ENCODE measurements at regions of chr5 and their contacts with region 1.

Region 1: GRCh38 chr5:79020861-79021561 is 35.9 kb upstream of the ARSB start:
- DNase-seq: peak; percentile 43
- H3K4me3 ChIP-seq: peak overlapping the region; percentile 15; the same call in 1 of the 2 replicates
- H3K27ac ChIP-seq: no peak overlapping the region
- H3K27me3 ChIP-seq: no peaks in the 10 kb centered on the region
- CTCF ChIP-seq: peak; percentile 90

Region 2: DNA sequence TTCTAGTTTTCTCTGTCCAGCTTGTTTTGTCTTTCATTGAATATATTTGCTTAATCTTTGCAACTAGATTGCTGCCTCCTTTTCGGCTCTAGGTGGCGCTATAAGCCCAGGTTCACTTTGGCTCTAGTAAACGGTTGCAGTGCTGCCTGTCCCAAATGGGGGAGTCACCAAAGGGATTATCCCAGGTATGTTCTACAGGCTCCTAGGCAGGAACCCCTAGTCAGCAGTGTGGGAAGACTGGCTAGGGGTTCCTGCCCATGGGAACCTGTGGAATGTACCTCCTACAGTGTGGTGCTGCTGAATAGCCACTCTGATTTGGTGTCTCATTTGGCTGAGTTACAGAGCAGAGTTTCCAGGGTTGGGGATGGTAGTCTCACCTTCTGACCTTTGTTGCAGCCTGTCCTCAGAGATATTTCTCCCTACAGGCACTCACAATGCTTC is 121.1 kb before region 1 on chr5:
- CTCF ChIA-PET with region 1: interaction called, 17 read pairs
- POLR2A ChIA-PET with region 1: no interaction called
- DNase-seq: no peak
- H3K4me3 ChIP-seq: no peak overlapping the region
- H3K27ac ChIP-seq: no peak overlapping the region
- H3K27me3 ChIP-seq: no peaks in the 10 kb centered on the region
- CTCF ChIP-seq: peak; percentile 77

Region 3: DNA sequence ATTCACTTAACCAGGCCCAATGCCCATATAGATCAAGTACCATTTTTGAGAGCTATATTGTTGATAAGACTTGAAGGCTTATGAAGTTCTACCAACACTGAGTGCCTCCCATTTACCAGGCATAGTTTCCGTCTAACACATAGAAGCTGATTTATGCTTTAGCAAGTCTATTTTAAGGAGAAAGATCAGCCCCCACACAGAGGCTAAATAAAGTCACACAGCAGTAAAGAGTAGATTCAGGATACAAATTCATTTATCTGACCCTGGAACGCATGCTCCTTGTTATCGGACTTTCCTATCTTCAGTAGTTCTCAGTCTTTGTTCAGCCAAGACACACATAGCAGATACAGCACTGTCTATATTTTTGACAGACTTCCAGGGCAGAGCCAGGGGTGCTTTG is 14.2 kb after region 1 on chr5:
- CTCF ChIA-PET with region 1: interaction called, 57 read pairs
- POLR2A ChIA-PET with region 1: no interaction called
- DNase-seq: no peak
- H3K4me3 ChIP-seq: no peak overlapping the region
- H3K27ac ChIP-seq: no peak overlapping the region
- H3K27me3 ChIP-seq: no peaks in the 10 kb centered on the region
- CTCF ChIP-seq: no peak

Region 4: GRCh38 chr5:79062436-79062835 is 41.4 kb after region 1 on chr5:
- CTCF ChIA-PET with region 1: interaction called, 13 read pairs
- POLR2A ChIA-PET with region 1: no interaction called
- DNase-seq: no peak
- H3K4me3 ChIP-seq: no peak overlapping the region
- H3K27ac ChIP-seq: no peak overlapping the region
- H3K27me3 ChIP-seq: no peaks in the 10 kb centered on the region
- CTCF ChIP-seq: no peak

Region 5: GRCh38 chr5:79120216-79120615 is 99.2 kb after region 1 on chr5:
- CTCF ChIA-PET with region 1: interaction called, 920 read pairs
- POLR2A ChIA-PET with region 1: no interaction called
- DNase-seq: no peak
- H3K4me3 ChIP-seq: no peak overlapping the region
- H3K27ac ChIP-seq: no peak overlapping the region
- H3K27me3 ChIP-seq: peaks cover 7% of the 10 kb centered on the region
- CTCF ChIP-seq: no peak

Region 6: GRCh38 chr5:79200573-79201183 is 179.7 kb after region 1 on chr5:
- CTCF ChIA-PET with region 1: interaction called, 18 read pairs
- POLR2A ChIA-PET with region 1: no interaction called
- DNase-seq: no peak
- H3K4me3 ChIP-seq: no peak overlapping the region
- H3K27ac ChIP-seq: no peak overlapping the region
- H3K27me3 ChIP-seq: no peaks in the 10 kb centered on the region
- CTCF ChIP-seq: peak; percentile 64

Region 7: DNA sequence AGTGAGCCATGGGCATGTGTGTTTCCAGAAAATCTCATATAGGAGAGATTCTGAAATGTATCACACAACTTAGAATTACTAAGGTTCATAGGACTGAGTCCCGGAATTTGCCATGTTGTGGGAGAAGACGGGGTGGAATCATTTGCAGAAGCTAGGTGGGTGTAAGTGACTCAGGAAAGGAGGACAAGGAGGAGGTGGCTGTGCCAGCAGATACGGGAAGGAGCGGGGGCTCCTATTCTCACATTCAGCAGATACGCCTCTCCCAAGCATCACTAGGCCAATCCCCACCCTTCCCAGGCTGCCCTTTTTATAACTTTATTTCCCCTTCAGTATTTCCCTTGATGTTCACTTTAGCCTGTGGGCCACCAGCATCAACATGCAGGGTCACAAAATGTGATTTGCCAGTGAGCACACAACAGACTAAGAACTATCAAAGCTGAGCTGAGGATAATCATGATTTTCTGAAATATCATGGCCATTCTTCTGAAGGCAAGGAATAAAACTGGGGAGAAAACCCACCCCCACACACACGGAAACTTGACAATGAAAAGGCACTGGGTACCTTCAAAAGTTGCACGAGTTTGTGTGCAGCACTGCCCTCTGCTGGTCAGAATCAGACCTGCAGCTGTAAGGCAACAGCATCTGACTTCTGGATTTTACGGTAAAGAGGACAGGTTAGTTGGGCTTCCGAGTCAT is 836.9 kb after region 1 on chr5:
- CTCF ChIA-PET with region 1: interaction called, 19 read pairs
- POLR2A ChIA-PET with region 1: no interaction called
- DNase-seq: no peak
- H3K4me3 ChIP-seq: no peak overlapping the region
- H3K27ac ChIP-seq: no peak overlapping the region
- H3K27me3 ChIP-seq: peaks cover 6% of the 10 kb centered on the region
- CTCF ChIP-seq: peak; percentile 98